ENCODE measurements at regions of chr19 and their contacts with region 1.

Region 1: GRCh38 chr19:45117669-45118068 is 24.7 kb downstream of the PPP1R37 start:
- DNase-seq: peak in 1 of 2 donors; percentile 77
- H3K4me3 ChIP-seq: peak overlapping the region in 1 of 3 donors; percentile 24
- H3K27ac ChIP-seq: peak overlapping the region; percentile 61 to 67
- H3K4me1 ChIP-seq: peaks cover 4 to 15% of the 10 kb centered on the region in 2 donors
- H3K27me3 ChIP-seq: no peaks in the 10 kb centered on the region
- CTCF ChIP-seq: no peak
- POLR2A ChIP-seq: no peak

Region 2: GRCh38 chr19:45069056-45069455 is 48.6 kb before region 1 on chr19:
- intact Hi-C with region 1: loop called (anchors 10 kb)
- DNase-seq: peak; percentile 75 to 84
- H3K4me3 ChIP-seq: no peak overlapping the region
- H3K27ac ChIP-seq: peak overlapping the region; percentile 66 to 87
- H3K4me1 ChIP-seq: peaks cover 10 to 34% of the 10 kb centered on the region in 2 donors
- H3K27me3 ChIP-seq: no peaks in the 10 kb centered on the region
- CTCF ChIP-seq: no peak
- POLR2A ChIP-seq: no peak